ENCODE measurements at regions of chr2 and their contacts with region 1.

Region 1: GRCh38 chr2:25606892-25607291 is 66.5 kb downstream of the DTNB start:
- DNase-seq: peak; percentile 39
- H3K4me3 ChIP-seq: no peak overlapping the region
- H3K27ac ChIP-seq: no peak overlapping the region
- H3K4me1 ChIP-seq: peaks cover 0 to 4% of the 10 kb centered on the region in 2 experiments; a peak in 1 of 4 replicates
- H3K27me3 ChIP-seq: no peaks in the 10 kb centered on the region
- CTCF ChIP-seq: peak; percentile 92
- EP300 ChIP-seq: no peak
- RAD21 ChIP-seq: peak; percentile 86

Region 2: DNA sequence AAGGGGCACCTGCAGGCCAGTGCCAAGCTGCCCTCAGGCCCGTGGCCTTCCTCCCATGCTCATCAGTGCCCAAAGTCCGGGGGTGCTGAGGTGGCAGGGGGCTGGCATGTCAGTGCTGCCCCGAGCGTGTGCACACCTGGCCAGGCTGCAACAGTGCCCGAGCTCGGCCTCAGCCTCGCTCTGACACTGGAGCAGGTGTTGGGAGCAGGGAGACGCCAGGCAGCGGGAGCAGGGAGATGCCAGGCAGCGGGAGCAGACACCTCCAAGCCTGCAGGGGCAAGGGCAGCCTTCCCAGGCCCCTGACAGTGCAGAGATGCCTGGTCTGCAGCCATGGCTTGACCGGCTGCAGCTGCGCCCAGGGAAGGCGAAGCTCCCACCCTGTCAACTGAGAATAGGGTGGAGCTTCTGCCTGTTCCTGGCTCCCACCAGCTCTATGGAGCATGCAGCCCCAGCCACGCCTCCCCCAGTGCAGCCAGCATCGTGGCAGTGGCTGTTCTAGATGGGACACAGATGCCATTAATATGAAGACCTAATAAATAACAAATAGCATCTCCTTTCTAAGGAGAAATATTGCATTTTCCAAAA is 15.9 kb before region 1 on chr2:
- CTCF ChIA-PET with region 1: interaction called, 13 read pairs
- POLR2A ChIA-PET with region 1: no interaction called
- DNase-seq: no peak
- H3K4me3 ChIP-seq: no peak overlapping the region
- H3K27ac ChIP-seq: no peak overlapping the region
- H3K4me1 ChIP-seq: peaks cover 20 to 26% of the 10 kb centered on the region in 2 experiments
- H3K27me3 ChIP-seq: no peaks in the 10 kb centered on the region
- CTCF ChIP-seq: no peak
- EP300 ChIP-seq: no peak
- RAD21 ChIP-seq: no peak

Region 3: GRCh38 chr2:25618642-25619037 is 11.7 kb after region 1 on chr2:
- CTCF ChIA-PET with region 1: interaction called, 15 read pairs
- POLR2A ChIA-PET with region 1: no interaction called
- DNase-seq: no peak
- H3K4me3 ChIP-seq: peak overlapping the region in 1 of 2 experiments; percentile 49; a peak in 1 of 4 replicates
- H3K27ac ChIP-seq: peak overlapping the region; percentile 73 to 99; a peak in 3 of 4 replicates
- H3K4me1 ChIP-seq: peaks cover 0 to 16% of the 10 kb centered on the region in 2 experiments; a peak in 3 of 4 replicates
- H3K27me3 ChIP-seq: no peaks in the 10 kb centered on the region
- CTCF ChIP-seq: no peak
- EP300 ChIP-seq: peak in 1 of 2 experiments; percentile 71; a peak in 1 of 4 replicates
- RAD21 ChIP-seq: no peak

Region 4: DNA sequence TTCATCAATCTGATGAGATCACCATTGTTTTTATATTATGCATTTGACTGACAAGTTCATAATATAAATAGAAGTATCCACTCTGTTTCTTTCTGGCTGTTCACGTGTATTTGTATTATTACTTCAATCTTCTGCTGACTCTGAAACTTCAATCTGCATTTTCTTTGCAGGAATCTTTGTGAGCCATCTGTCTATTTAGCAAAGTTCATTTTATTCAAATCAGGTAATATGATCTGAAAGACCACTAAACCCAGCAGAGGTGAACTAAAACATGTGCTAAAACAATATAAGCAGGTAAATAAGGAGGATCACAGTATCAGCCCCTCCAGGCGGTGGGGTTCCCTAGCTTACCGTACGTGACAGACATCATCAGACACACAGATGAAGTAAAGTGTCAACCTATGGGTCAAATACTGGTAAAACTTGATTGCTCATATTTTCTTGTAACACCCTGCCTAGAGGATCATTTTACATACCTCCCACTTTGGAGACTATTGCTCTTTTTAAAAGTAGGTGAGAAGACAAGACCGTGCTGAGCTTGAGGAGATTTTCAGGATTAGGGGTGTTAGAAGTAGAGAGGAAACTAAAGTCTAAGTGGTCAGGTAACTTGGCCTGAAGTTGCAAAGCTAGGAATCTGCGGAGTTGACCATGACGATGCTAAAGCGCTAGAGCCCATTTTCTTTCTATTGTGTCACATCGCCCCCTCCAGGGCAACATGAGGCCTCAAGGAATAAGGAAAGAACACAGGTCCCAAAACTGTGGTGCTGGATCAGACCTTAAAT is 57.5 kb after region 1 on chr2:
- CTCF ChIA-PET with region 1: interaction called, 25 read pairs
- POLR2A ChIA-PET with region 1: no interaction called
- DNase-seq: peak; percentile 64
- H3K4me3 ChIP-seq: no peak overlapping the region
- H3K27ac ChIP-seq: no peak overlapping the region
- H3K4me1 ChIP-seq: peaks cover 0 to 2% of the 10 kb centered on the region in 2 experiments; a peak in 1 of 4 replicates
- H3K27me3 ChIP-seq: no peaks in the 10 kb centered on the region
- CTCF ChIP-seq: peak; percentile 85
- EP300 ChIP-seq: no peak
- RAD21 ChIP-seq: peak; percentile 80

Measured in SK-N-SH (cell line).